ENCODE measurements at regions of chr3 and their contacts with region 1.

Region 1: DNA sequence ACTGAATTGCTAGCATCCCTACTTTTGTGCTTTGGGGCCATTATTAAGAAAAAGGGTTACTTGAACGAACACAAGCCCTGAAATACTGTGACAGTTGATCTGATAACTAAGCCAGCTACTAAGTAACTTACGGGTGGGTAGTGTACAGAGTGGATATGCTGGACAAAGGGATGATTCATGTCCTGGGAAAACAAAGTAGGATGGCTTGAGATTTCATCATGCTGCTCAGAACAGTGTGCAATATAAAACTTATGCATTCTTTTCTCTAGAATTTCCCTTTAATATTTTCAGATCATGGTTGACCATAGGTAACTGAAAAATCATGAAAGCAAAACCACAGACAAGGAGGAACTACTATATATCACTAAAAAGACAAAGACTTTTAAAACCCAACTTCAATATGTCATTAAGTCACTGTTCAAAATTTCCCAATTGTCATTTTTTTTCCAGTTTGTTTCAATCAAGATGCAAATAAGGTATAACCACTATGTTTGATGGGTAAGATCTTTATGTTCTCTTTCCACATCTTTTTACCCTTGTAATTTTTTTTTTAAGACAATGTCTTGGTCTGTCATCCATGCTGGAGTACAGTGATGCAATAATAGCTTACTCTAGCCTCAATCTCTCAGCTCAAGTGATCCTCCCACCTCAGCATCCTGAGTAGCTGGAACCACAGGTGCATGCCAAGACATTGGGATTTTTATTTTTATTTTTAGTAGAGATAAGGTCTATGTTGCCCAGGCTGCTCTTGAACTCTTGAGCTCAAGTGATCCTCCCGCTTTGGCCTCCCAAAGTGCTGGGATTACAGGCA is 67.7 kb downstream of the IFT80 start:
- DNase-seq: peak; percentile 56
- ATAC-seq: no peak
- H3K4me3 ChIP-seq: no peak overlapping the region
- H3K27ac ChIP-seq: peak overlapping the region; percentile 5; the same call in 1 of the 2 replicates
- H3K4me1 ChIP-seq: no peaks in the 10 kb centered on the region
- H3K27me3 ChIP-seq: no peaks in the 10 kb centered on the region
- CTCF ChIP-seq: no peak

Region 2: DNA sequence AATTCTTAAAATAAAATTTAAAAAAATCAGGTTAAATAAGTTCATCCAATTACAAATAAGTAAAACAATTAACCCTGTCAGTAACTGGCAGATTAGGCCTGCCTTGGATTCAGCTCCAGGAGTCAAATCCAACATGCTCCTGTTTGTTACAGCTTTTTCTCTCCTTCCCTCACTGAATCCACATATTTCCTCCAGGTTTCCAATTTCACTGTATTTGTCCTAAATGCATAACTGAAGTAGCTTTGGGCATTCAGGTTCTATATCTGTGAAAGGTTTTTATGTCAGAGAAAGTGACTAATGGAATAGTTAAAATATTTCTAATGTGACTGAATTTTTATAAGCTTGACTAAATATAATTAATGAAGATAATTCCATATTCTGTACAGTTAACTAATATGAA is 12.0 kb before region 1 on chr3:
- CTCF ChIA-PET with region 1: no interaction called
- POLR2A ChIA-PET with region 1: no interaction called
- in situ Hi-C with region 1: no loop called
- intact Hi-C with region 1: no loop called
- DNase-seq: no peak
- ATAC-seq: no peak
- H3K4me3 ChIP-seq: no peak overlapping the region
- H3K27ac ChIP-seq: no peak overlapping the region
- H3K4me1 ChIP-seq: no peaks in the 10 kb centered on the region
- H3K27me3 ChIP-seq: no peaks in the 10 kb centered on the region
- CTCF ChIP-seq: no peak

Region 3: DNA sequence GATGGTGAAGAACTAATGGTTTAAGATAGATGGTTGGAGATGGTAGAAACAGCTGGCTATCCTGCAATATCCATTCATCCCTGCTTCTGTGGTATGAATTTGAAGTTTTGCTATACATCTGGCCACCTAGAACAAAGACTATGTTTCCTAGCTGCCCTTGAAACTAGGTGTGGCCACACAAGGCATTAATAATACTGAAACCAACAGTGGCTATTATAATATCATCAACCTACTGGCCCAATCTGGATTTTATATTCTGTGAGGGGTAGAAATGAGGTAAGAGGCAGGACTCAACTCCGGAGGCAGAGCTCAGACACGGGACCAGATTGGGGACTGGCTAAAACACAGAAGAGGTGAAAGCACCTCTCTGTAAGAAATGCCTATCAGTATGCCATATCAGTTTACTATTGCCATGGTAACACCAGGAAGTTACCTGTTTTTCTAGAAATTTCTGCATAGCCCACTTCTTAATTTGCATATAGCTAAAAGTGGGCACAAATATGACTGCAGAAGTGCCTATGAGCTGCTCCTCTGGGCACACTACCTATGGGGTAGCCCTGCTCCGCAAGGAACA is 59.3 kb after region 1 on chr3:
- CTCF ChIA-PET with region 1: no interaction called
- POLR2A ChIA-PET with region 1: no interaction called
- in situ Hi-C with region 1: no loop called
- intact Hi-C with region 1: loop called (anchors 2 kb)
- DNase-seq: no peak
- ATAC-seq: no peak
- H3K4me3 ChIP-seq: no peak overlapping the region
- H3K27ac ChIP-seq: no peak overlapping the region
- H3K4me1 ChIP-seq: peaks cover 3% of the 10 kb centered on the region; the same call in 1 of the 2 replicates
- H3K27me3 ChIP-seq: no peaks in the 10 kb centered on the region
- CTCF ChIP-seq: no peak

Measured in Panc1 (cell line).